H1 (cell line): ENCODE measurements at regions of chrX and their contacts with region 1.

Region 1: GRCh38 chrX:132059973-132060540 is 37.0 kb downstream of the STK26 start:
- DNase-seq: no peak
- H3K4me3 ChIP-seq: no peak overlapping the region
- H3K27ac ChIP-seq: no peak overlapping the region
- H3K4me1 ChIP-seq: no peaks in the 10 kb centered on the region
- H3K27me3 ChIP-seq: no peaks in the 10 kb centered on the region
- CTCF ChIP-seq: no peak
- EP300 ChIP-seq: no peak
- POLR2A ChIP-seq: no peak
- RAD21 ChIP-seq: no peak

Region 2: GRCh38 chrX:132071260-132071659 is 11.2 kb after region 1 on chrX:
- CTCF ChIA-PET with region 1: interaction called, 11 read pairs
- POLR2A ChIA-PET with region 1: no interaction called
- DNase-seq: no peak
- H3K4me3 ChIP-seq: no peak overlapping the region
- H3K27ac ChIP-seq: no peak overlapping the region
- H3K4me1 ChIP-seq: no peaks in the 10 kb centered on the region
- H3K27me3 ChIP-seq: no peaks in the 10 kb centered on the region
- CTCF ChIP-seq: peak in 1 of 3 experiments; percentile 9; a peak in 1 of 4 replicates
- EP300 ChIP-seq: no peak
- POLR2A ChIP-seq: no peak
- RAD21 ChIP-seq: peak in 1 of 2 experiments; percentile 27; a peak in 3 of 4 replicates